B cell (primary cell): ENCODE measurements at regions of chr4 and their contacts with region 1.

Region 1: GRCh38 chr4:87073199-87074120 is 138.6 kb downstream of the AFF1 start:
- DNase-seq: peak; percentile 79
- ATAC-seq: peak; percentile 86
- H3K4me3 ChIP-seq: peak overlapping the region; percentile 23 to 64 (median 45)
- H3K4me3 Mint-ChIP-seq: peak overlapping the region; percentile 84
- H3K27ac ChIP-seq: peak overlapping the region; percentile 65 to 83
- H3K27ac Mint-ChIP-seq: peak overlapping the region; percentile 76
- H3K4me1 ChIP-seq: peaks cover 10 to 22% of the 10 kb centered on the region in 2 donors
- H3K4me1 Mint-ChIP-seq: peaks cover 37% of the 10 kb centered on the region
- H3K27me3 ChIP-seq: no peaks in the 10 kb centered on the region
- H3K27me3 Mint-ChIP-seq: no peaks in the 10 kb centered on the region
- CTCF ChIP-seq: no peak

Region 2: GRCh38 chr4:86927843-86928395 is 145.5 kb before region 1 on chr4:
- CTCF ChIA-PET with region 1: interaction called, 35 read pairs
- POLR2A ChIA-PET with region 1: no interaction called
- intact Hi-C with region 1: no loop called
- DNase-seq: no peak
- ATAC-seq: no peak
- H3K4me3 ChIP-seq: no peak overlapping the region
- H3K4me3 Mint-ChIP-seq: no peak overlapping the region
- H3K27ac ChIP-seq: no peak overlapping the region
- H3K27ac Mint-ChIP-seq: no peak overlapping the region
- H3K4me1 ChIP-seq: peaks cover 10 to 13% of the 10 kb centered on the region in 2 donors
- H3K4me1 Mint-ChIP-seq: peaks cover 14% of the 10 kb centered on the region
- H3K27me3 ChIP-seq: no peaks in the 10 kb centered on the region
- H3K27me3 Mint-ChIP-seq: no peaks in the 10 kb centered on the region
- CTCF ChIP-seq: no peak

Region 3: DNA sequence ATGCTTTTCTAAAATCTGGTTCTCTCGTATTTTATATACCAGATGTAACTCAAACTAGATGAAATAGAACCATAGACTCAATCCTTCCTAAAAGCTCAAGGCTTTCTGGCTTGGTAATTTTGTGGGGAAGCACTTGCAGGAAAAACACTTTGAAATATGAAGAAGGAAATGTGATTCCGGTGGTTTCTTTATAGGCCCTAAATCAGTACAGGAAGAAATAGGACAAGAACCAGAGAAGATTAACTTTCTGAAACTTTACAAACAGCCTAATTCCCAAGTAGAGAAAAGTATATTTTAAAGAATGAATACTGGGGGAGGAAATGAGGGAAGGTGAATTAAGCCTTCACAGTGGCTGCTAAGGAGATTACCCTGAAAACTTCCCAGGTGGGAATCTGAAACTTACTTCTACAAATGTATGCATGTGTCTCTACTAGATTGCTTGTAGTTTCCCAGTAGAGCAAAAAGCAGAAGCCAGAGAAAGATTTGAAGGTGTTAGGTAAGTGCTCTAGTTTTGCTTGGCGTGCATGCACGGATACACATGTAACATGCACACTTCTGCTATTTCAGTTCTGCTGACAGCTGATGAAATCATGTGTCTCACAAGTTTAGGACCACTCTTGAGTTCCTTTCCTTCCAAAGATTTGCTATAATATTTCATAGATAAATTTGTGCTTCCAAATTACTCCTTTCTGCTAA is 46.5 kb before region 1 on chr4:
- CTCF ChIA-PET with region 1: no interaction called
- POLR2A ChIA-PET with region 1: no interaction called
- intact Hi-C with region 1: loop called (anchors 2 kb)
- DNase-seq: peak; percentile 82
- ATAC-seq: peak; percentile 96
- H3K4me3 ChIP-seq: no peak overlapping the region
- H3K4me3 Mint-ChIP-seq: peak overlapping the region; percentile 52
- H3K27ac ChIP-seq: peak overlapping the region; percentile 48 to 78
- H3K27ac Mint-ChIP-seq: peak overlapping the region; percentile 80
- H3K4me1 ChIP-seq: peaks cover 40 to 61% of the 10 kb centered on the region in 2 donors
- H3K4me1 Mint-ChIP-seq: peaks cover 52% of the 10 kb centered on the region
- H3K27me3 ChIP-seq: no peaks in the 10 kb centered on the region
- H3K27me3 Mint-ChIP-seq: no peaks in the 10 kb centered on the region
- CTCF ChIP-seq: no peak